ENCODE measurements at regions of chr7 and their contacts with region 1.

Region 1: GRCh38 chr7:150567169-150567568 is at the start of gene GIMAP4:
- DNase-seq: peak in 2 of 10 donors; percentile 36 to 47
- ATAC-seq: peak; percentile 37 to 49
- H3K4me3 Mint-ChIP-seq: peak within 1 kb of the TSS; percentile 83 to 100 (median 99)
- H3K27ac Mint-ChIP-seq: peak within 1 kb of the TSS; percentile 95 to 99 (median 97)
- H3K4me1 Mint-ChIP-seq: peaks cover 35 to 87% (median 79%) of the 10 kb centered on the region in 4 donors
- H3K27me3 Mint-ChIP-seq: no peaks in the 10 kb centered on the region
- polyA plus RNA-seq, gene GIMAP4: 233 to 526 (median 341) TPM

Region 2: GRCh38 chr7:150378853-150379440 is 188.2 kb before region 1 on chr7 and contains the start of gene ZNF775:
- POLR2A ChIA-PET with region 1: no interaction called
- DNase-seq: peak; percentile 88 to 94 (median 91)
- ATAC-seq: peak; percentile 93 to 96
- H3K4me3 Mint-ChIP-seq: peak within 1 kb of the TSS; percentile 82 to 95 (median 90)
- H3K27ac Mint-ChIP-seq: peak within 1 kb of the TSS; percentile 85 to 93 (median 90)
- H3K4me1 Mint-ChIP-seq: peaks cover 27 to 65% (median 60%) of the 10 kb centered on the region in 4 donors
- H3K27me3 Mint-ChIP-seq: no peaks in the 10 kb centered on the region
- polyA plus RNA-seq, gene ZNF775: 1.5 to 7.6 (median 3.1) TPM

Region 3: GRCh38 chr7:150514748-150515222 is 52.4 kb before region 1 on chr7 and contains the start of gene GIMAP7:
- POLR2A ChIA-PET with region 1: interaction called, 550 read pairs
- DNase-seq: peak; percentile 29 to 87 (median 71)
- ATAC-seq: peak; percentile 72 to 85
- H3K4me3 Mint-ChIP-seq: peak within 1 kb of the TSS; percentile 96 to 100 (median 99)
- H3K27ac Mint-ChIP-seq: peak within 1 kb of the TSS; percentile 94 to 99 (median 98)
- H3K4me1 Mint-ChIP-seq: peaks cover 25 to 50% (median 48%) of the 10 kb centered on the region in 4 donors
- H3K27me3 Mint-ChIP-seq: no peaks in the 10 kb centered on the region
- polyA plus RNA-seq, gene GIMAP7: 451 to 821 (median 658) TPM

Region 4: DNA sequence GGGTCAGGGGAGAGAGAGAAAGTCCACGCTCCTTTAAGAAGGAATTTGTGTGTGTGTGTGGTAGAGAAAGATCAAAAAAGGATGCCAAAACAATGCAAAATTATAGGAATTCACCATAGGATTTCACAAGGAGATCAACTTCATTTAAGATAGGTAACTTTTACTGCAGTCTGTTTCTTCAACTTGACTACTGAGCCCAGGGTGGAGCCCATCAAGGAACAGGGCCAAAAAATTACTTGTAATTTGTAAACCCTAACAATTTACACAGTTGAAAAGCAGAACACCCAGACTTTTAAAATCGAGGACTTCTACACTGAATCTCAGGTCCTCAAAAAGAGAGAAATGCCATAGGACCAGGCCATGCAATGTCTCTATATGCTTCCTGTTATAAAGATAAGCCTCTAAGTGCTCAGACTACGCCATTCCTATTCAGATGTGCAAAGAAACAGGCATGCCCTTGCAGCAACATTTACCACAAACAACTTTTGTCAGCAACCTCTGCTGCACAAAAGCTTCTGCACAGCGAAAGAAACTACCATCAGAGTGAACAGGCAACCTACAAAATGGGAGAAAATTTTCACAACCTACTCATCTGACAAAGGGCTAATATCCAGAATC is 10.5 kb before region 1 on chr7:
- POLR2A ChIA-PET with region 1: interaction called, 34 read pairs
- DNase-seq: peak in 5 of 10 donors; percentile 41 to 76 (median 68)
- ATAC-seq: peak; percentile 96 to 97
- H3K4me3 Mint-ChIP-seq: peak overlapping the region; percentile 48 to 87 (median 82)
- H3K27ac Mint-ChIP-seq: peak overlapping the region; percentile 84 to 99 (median 96)
- H3K4me1 Mint-ChIP-seq: peaks cover 43 to 87% (median 86%) of the 10 kb centered on the region in 4 donors
- H3K27me3 Mint-ChIP-seq: no peaks in the 10 kb centered on the region

Region 5: GRCh38 chr7:150657526-150657925 is 90.4 kb after region 1 on chr7:
- POLR2A ChIA-PET with region 1: interaction called, 12 read pairs
- DNase-seq: no peak
- ATAC-seq: no peak
- H3K4me3 Mint-ChIP-seq: no peak overlapping the region
- H3K27ac Mint-ChIP-seq: no peak overlapping the region
- H3K4me1 Mint-ChIP-seq: peaks cover 12 to 53% (median 42%) of the 10 kb centered on the region in 4 donors
- H3K27me3 Mint-ChIP-seq: no peaks in the 10 kb centered on the region

Region 6: DNA sequence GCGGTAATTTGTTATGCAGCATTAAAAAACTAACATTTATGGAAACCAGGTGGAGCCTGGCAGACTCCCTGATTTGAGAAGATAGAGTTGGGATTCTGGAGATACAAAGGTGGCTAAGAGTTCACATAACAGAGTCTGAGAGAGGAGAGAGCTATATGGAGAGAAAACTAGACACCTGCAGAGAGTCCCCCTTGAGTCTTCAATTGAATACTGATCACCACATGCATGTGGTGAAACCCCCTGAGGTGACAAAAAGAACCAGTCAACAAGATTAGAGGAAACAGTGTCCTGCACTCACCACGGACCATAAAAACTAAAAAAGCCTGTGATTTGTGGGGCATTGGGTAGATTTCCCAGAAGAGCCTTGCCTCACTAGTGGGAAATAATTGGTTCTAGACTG is 128.5 kb after region 1 on chr7:
- POLR2A ChIA-PET with region 1: interaction called, 178 read pairs
- DNase-seq: no peak
- ATAC-seq: no peak
- H3K4me3 Mint-ChIP-seq: no peak overlapping the region
- H3K27ac Mint-ChIP-seq: peak overlapping the region in 2 of 10 donors; percentile 27 to 58
- H3K4me1 Mint-ChIP-seq: peaks cover 1 to 28% (median 15%) of the 10 kb centered on the region in 4 donors
- H3K27me3 Mint-ChIP-seq: no peaks in the 10 kb centered on the region

Region 7: DNA sequence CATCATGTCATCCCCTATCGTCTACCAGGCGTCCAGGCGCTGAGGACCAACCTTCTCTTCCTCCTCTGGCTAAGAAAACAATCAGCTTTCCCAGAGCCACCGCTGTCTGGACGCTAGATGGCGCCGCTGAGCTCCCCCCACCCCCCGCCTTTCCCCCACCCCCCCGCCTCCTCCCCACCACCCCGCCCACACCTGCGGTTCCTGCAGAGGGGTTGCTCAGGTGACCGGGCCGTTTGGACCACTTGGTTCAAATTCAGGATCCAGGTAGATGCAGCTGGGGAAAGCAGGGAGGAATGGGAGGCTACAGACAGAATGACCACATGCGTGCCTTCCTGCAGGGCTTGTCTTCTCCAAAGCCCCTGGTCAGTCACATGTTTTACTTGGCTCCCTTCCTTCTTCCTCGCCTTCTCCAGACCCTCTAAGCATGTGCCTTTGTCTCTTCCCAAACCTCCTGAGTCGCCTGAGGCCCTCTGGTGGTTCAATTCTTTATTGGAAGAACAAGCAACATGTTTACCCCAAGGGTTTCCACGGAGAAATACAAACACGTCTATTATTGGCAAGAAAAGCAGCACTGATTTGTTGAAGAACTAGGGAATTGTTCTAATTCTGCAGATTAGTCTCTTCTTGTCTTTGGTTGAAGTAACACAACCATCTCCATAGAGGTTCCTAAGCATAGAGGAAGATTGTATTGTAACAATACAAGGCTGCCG is 309.8 kb after region 1 on chr7:
- POLR2A ChIA-PET with region 1: no interaction called
- DNase-seq: peak in 9 of 10 donors; percentile 27 to 60 (median 44)
- ATAC-seq: peak; percentile 64 to 76
- H3K4me3 Mint-ChIP-seq: peak overlapping the region in 9 of 10 donors; percentile 42 to 78 (median 67)
- H3K27ac Mint-ChIP-seq: peak overlapping the region in 9 of 10 donors; percentile 46 to 87 (median 70)
- H3K4me1 Mint-ChIP-seq: peaks cover 9 to 30% (median 21%) of the 10 kb centered on the region in 4 donors
- H3K27me3 Mint-ChIP-seq: peaks cover 0 to 8% (median 0%) of the 10 kb centered on the region in 5 donors

Measured in naive thymus-derived CD8-positive, alpha-beta T cell (primary cell).